Activated CD4-positive, alpha-beta T cell treated with anti-CD3 and anti-CD28 coated beads for 36 hours (primary cell): ENCODE measurements at regions of chr3 and their contacts with region 1.

Region 1: DNA sequence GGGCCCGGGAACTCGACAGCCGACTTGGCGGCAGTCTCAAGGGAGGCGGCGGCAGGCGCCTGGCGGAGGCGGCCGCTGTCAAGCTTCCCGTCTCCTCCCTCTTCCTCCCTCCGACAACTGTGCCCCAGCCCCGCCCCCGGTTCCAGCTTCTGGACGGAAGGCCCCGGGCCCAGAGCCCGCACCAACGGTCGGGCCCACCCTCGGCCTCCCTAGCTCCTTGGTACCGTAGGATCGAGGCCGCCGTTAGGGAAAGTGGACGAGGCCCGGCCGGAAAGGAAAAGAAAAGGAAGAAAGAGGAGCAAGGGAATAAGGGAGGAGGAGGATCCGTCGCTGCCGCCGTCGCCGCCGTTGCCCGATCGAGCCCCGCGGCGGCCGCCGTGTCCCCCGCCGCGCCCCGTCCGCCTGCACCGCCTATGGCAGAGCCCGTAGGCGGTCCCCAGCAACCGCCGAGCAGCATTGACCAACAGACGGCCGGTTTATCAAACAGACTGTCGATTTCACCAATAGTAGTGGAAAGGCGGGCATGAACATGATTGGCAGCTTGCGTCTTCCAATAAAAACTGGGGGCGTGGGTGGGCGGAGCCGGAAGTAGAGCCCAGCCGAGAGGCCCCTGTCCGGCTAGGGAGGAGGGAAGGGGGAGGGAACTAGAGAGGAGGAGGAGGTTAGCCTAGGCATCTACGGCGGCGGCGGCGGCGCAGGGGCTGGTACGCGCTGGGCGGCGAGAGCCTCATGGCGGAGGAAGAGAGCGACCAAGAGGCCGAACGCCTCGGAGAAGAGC is at the starts of genes CGGBP1 and ZNF654:
- DNase-seq: peak; percentile 99
- ATAC-seq: peak; percentile 96
- H3K4me3 Mint-ChIP-seq: peak within 1 kb of the TSS; percentile 94
- H3K27ac Mint-ChIP-seq: peak within 1 kb of the TSS; percentile 97
- H3K4me1 Mint-ChIP-seq: peaks cover 47% of the 10 kb centered on the region
- H3K27me3 Mint-ChIP-seq: no peaks in the 10 kb centered on the region
- total RNA-seq, gene CGGBP1: 85.4 to 95.5 TPM
- total RNA-seq, gene ZNF654: 21.3 to 28.9 TPM

Region 2: DNA sequence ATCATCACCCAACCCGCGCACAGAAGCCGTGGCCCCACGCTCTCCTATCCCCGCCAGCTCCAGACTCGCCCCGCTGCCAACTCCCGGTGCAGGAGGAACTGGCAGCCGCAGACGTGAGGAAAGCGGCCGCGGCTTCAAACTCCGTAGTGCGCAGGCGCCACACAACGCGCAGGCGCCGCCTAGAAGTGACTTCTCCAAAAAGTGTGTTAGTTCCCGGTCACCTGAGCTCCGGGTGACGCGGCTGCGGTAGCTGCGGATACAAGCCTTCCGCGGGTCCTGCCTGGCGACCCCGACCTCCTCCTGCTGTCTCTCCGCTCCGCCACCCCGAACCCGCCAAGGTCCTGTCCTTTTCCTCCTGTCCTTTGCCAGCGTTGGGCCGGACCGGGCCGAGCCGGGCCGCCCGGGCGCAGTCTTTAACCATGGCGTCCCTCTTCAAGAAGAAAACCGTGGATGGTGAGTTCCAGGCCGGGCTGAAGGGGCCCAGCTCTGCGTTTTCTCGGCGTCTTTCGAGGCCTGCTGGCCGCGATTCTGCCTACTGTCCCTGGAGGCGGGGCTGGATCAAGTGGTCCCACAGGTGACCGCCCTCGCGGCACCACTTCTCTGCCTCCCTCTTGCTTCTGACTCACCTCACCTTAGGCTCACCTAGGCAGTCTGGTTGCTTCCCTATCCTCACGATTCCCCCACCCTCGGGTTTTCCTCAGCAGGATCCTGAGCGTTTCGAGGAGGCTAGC is 831.5 kb before region 1 on chr3 and contains the start of gene CHMP2B:
- CTCF ChIA-PET with region 1: no interaction called
- POLR2A ChIA-PET with region 1: no interaction called
- intact Hi-C with region 1: loop called in 1 of 2 experiments (anchors 5 kb)
- DNase-seq: peak; percentile 94
- ATAC-seq: peak; percentile 94
- H3K4me3 Mint-ChIP-seq: peak within 1 kb of the TSS; percentile 97
- H3K27ac Mint-ChIP-seq: peak within 1 kb of the TSS; percentile 96
- H3K4me1 Mint-ChIP-seq: peaks cover 40% of the 10 kb centered on the region
- H3K27me3 Mint-ChIP-seq: peaks cover 9% of the 10 kb centered on the region
- total RNA-seq, gene CHMP2B: 25.4 to 29.4 TPM

Region 3: GRCh38 chr3:88031642-88032077 is 27.1 kb before region 1 on chr3:
- CTCF ChIA-PET with region 1: interaction called, 4 read pairs
- POLR2A ChIA-PET with region 1: interaction called, 3 read pairs
- intact Hi-C with region 1: loop called in 1 of 2 experiments (anchors 1 kb)
- DNase-seq: peak; percentile 29
- ATAC-seq: peak; percentile 88
- H3K4me3 Mint-ChIP-seq: peak overlapping the region; percentile 68
- H3K27ac Mint-ChIP-seq: peak overlapping the region; percentile 80
- H3K4me1 Mint-ChIP-seq: peaks cover 32% of the 10 kb centered on the region
- H3K27me3 Mint-ChIP-seq: no peaks in the 10 kb centered on the region

Region 4: GRCh38 chr3:88149509-88150362 is 91.0 kb after region 1 on chr3 and contains the start of gene C3orf38:
- CTCF ChIA-PET with region 1: no interaction called
- POLR2A ChIA-PET with region 1: interaction called, 15 read pairs
- intact Hi-C with region 1: loop called (anchors 1 kb)
- DNase-seq: peak; percentile 87
- ATAC-seq: peak; percentile 87
- H3K4me3 Mint-ChIP-seq: peak within 1 kb of the TSS; percentile 95
- H3K27ac Mint-ChIP-seq: peak within 1 kb of the TSS; percentile 99
- H3K4me1 Mint-ChIP-seq: peaks cover 37% of the 10 kb centered on the region
- H3K27me3 Mint-ChIP-seq: no peaks in the 10 kb centered on the region
- total RNA-seq, gene C3orf38: 22.4 to 27.4 TPM

Region 5: DNA sequence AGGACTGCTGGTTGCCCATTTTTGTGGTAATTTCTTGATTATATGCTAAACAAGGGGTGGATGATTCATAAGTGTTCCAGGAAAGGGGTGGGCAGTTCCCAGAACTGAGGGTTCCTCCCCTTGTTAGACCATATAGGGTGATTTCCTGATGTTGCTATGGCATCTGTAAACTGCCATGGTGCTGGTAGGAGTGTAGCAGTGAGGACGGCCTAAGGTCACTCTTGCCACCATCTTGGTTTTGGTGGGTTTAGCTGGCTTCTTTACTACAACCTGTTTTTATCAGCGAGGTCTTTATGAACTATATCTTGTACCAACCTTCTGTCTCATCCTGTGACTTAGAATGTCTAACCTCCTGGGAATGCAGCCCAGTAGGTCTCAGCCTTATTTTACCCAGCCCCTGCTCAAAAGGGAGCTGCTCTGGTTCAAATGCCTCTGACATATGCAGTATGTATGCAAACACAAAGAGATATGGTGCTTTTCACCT is 137.2 kb after region 1 on chr3:
- CTCF ChIA-PET with region 1: no interaction called
- POLR2A ChIA-PET with region 1: no interaction called
- intact Hi-C with region 1: no loop called
- DNase-seq: peak; percentile 78
- ATAC-seq: peak; percentile 88
- H3K4me3 Mint-ChIP-seq: no peak overlapping the region
- H3K27ac Mint-ChIP-seq: no peak overlapping the region
- H3K4me1 Mint-ChIP-seq: peaks cover 7% of the 10 kb centered on the region
- H3K27me3 Mint-ChIP-seq: peaks cover 4% of the 10 kb centered on the region